Activated naive CD4-positive, alpha-beta T cell treated with anti-CD3 and anti-CD28 coated beads for 36 hours (primary cell): ENCODE measurements at regions of chr2 and their contacts with region 1.

Region 1: DNA sequence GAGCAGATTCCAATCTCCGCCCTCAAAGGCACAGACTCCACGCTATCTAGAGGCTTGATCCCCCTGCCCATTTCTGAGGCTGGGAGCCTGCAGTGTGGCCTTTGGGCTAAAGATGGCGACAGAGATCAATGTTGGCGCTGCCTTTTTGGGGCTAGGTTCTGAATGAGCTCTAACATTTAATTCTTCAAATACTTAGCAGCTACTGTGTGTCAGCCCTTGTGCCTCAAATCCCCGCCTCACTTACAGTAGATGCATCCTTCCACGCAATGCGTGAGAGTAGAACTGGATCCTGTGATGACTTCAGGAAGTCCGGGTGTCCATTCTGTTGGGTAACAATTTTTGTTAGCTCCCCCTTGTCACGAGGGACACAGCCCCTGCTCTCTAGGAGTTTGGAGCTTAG is 12.4 kb downstream of the IL1F10 start:
- DNase-seq: peak; percentile 73
- H3K4me3 Mint-ChIP-seq: no peak overlapping the region
- H3K27ac Mint-ChIP-seq: no peak overlapping the region
- H3K4me1 Mint-ChIP-seq: peaks cover 12% of the 10 kb centered on the region
- H3K27me3 Mint-ChIP-seq: no peaks in the 10 kb centered on the region

Region 2: GRCh38 chr2:112706170-112706664 is 373.9 kb before region 1 on chr2:
- CTCF ChIA-PET with region 1: no interaction called
- intact Hi-C with region 1: no loop called
- DNase-seq: peak; percentile 77
- H3K4me3 Mint-ChIP-seq: no peak overlapping the region
- H3K27ac Mint-ChIP-seq: no peak overlapping the region
- H3K4me1 Mint-ChIP-seq: peaks cover 15% of the 10 kb centered on the region
- H3K27me3 Mint-ChIP-seq: peaks cover 11% of the 10 kb centered on the region

Region 3: DNA sequence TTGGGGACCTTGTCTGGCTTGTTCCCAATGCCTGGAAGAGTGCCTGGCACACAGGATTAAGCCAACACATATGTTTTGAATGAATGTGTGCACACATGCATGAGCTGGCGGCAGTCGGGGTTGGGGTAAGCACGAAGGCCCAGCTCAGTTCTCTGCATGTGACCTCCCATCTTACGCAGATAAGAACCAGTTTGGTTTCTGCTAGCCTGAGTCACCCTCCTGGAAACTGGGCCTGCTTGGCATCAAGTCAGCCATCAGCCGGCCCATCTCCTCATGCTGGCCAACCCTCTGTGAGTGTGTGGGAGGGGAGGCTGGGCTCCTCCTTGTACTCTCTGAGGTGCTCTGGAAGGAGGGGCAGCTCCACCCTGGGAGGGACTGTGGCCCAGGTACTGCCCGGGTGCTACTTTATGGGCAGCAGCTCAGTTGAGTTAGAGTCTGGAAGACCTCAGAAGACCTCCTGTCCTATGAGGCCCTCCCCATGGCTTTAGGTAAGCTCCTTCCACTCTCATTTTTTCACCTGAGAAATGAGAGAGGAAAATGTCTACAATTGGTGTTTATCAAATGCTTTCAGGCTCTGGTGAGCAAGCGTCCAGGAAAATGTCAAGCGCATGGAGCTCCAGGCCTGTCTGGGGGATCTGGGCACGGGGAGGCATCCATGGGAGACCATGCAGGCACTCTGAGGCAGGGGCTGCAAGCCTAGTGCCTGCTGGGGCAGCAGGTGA is 37.6 kb after region 1 on chr2:
- CTCF ChIA-PET with region 1: interaction called, 4 read pairs
- intact Hi-C with region 1: loop called (anchors 5 kb)
- DNase-seq: peak; percentile 74
- H3K4me3 Mint-ChIP-seq: no peak overlapping the region
- H3K27ac Mint-ChIP-seq: no peak overlapping the region
- H3K4me1 Mint-ChIP-seq: peaks cover 14% of the 10 kb centered on the region
- H3K27me3 Mint-ChIP-seq: no peaks in the 10 kb centered on the region

Region 4: GRCh38 chr2:113157118-113157896 is 77.2 kb after region 1 on chr2:
- CTCF ChIA-PET with region 1: interaction called, 11 read pairs
- intact Hi-C with region 1: no loop called
- DNase-seq: peak; percentile 67
- H3K4me3 Mint-ChIP-seq: peak overlapping the region; percentile 82
- H3K27ac Mint-ChIP-seq: peak overlapping the region; percentile 86
- H3K4me1 Mint-ChIP-seq: peaks cover 23% of the 10 kb centered on the region
- H3K27me3 Mint-ChIP-seq: no peaks in the 10 kb centered on the region

Region 5: DNA sequence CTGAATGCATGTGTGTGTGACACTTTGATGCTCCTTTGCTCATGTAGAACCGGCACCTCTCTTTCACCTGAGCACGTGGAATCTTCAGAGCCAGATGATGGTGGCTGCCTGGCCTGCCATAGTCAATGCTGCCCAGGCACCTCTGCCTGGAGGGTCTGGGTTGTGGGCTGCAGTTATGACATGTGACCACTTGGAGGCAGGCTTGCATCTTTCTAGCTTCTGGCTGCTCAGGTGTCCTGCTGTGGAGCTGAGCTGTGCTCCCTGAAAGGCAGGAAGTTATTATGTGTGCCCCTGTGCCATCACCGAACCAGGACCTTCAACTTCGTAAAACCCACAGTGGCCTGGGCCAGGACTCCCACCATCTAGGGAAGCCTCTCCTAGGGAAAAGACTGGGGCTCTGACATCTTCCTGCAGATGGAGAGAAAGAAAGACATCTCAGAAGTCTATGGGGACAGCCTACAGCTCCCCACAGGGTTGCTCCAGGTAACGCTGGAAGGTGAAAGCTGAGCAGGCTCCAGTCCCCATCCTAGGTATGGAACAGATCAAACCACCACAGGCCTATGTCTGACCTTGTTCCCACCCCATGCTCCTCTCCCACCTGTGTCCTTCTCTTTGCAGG is 123.9 kb after region 1 on chr2:
- CTCF ChIA-PET with region 1: interaction called, 30 read pairs
- intact Hi-C with region 1: loop called (anchors 1 kb)
- DNase-seq: peak; percentile 87
- H3K4me3 Mint-ChIP-seq: no peak overlapping the region
- H3K27ac Mint-ChIP-seq: peak overlapping the region; percentile 82
- H3K4me1 Mint-ChIP-seq: peaks cover 15% of the 10 kb centered on the region
- H3K27me3 Mint-ChIP-seq: no peaks in the 10 kb centered on the region

Region 6: DNA sequence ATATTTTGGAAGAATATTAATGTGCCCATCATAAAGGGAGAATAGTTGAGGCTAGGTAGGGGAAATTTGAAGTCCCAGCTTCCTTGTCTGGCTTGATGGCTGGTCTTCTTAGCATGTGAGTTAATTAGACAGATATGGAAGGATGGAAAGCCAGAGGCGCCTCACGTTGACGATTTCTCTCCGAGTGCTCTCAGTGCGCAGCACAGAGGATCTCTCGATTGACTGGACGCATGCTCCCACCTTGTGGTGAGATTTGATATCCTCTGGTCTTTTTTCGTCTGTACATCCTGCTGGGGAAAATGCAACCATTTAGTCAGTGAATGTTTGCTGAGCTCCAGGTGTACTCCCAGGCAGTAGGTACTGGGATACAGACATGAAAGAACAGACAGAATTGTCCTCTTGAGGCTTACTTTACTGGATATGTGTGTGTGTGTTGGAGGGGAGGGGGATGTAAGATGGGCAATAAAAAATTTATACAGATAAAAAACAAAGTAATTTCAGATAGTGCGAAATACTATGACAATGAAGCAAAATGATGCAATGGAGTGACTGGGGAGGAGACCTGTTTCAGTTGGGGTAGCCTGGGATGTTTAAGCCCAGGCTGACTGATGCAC is 290.5 kb after region 1 on chr2:
- CTCF ChIA-PET with region 1: interaction called, 4 read pairs
- intact Hi-C with region 1: loop called (anchors 1 kb)
- DNase-seq: peak; percentile 86
- H3K4me3 Mint-ChIP-seq: no peak overlapping the region
- H3K27ac Mint-ChIP-seq: no peak overlapping the region
- H3K4me1 Mint-ChIP-seq: peaks cover 5% of the 10 kb centered on the region
- H3K27me3 Mint-ChIP-seq: no peaks in the 10 kb centered on the region